HEK293T (cell line): ENCODE measurements at regions of chr18 and their contacts with region 1.

Region 1: DNA sequence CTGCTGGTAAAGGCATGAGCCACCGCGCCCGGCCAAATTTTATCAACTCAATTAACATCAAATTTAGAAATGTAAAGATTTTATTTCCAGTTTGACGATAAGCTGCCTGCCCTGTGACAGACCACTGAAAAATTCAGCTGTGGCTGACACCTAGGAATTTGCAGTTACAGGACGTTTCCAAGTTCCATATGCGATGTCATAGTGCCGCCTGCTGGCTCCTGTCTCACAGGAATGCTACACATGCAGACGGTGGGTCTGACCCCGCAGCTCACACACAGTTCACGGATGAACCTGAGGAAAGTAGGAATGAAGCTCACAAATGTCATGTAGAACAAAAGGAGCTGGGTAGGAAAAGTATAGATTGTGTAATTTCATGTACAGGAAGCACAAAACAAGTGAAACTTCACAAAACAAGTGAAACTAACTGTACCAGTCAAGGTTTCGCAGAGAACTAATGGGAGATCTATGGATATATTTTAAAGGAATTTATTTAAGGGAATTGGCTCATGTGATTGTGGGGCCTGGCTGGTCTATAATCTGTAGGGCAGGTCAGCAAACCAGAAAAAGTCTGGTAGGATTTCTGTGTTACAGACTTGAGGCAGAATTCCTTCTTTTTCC is 13.2 kb upstream of the SEH1L start:
- DNase-seq: peak; percentile 72

Region 2: GRCh38 chr18:12726774-12727550 is 207.6 kb before region 1 on chr18:
- CTCF ChIA-PET with region 1: interaction called, 14 read pairs
- POLR2A ChIA-PET with region 1: interaction called, 4 read pairs
- DNase-seq: peak; percentile 61

Region 3: GRCh38 chr18:12862467-12862866 is 72.1 kb before region 1 on chr18:
- CTCF ChIA-PET with region 1: no interaction called
- POLR2A ChIA-PET with region 1: no interaction called
- DNase-seq: no peak

Region 4: GRCh38 chr18:13003466-13003896 is 68.9 kb after region 1 on chr18:
- CTCF ChIA-PET with region 1: no interaction called
- POLR2A ChIA-PET with region 1: no interaction called
- DNase-seq: peak; percentile 57